Sigmoid colon (tissue), 7 donors: ENCODE measurements at regions of chr3 and their contacts with region 1.

Region 1: DNA sequence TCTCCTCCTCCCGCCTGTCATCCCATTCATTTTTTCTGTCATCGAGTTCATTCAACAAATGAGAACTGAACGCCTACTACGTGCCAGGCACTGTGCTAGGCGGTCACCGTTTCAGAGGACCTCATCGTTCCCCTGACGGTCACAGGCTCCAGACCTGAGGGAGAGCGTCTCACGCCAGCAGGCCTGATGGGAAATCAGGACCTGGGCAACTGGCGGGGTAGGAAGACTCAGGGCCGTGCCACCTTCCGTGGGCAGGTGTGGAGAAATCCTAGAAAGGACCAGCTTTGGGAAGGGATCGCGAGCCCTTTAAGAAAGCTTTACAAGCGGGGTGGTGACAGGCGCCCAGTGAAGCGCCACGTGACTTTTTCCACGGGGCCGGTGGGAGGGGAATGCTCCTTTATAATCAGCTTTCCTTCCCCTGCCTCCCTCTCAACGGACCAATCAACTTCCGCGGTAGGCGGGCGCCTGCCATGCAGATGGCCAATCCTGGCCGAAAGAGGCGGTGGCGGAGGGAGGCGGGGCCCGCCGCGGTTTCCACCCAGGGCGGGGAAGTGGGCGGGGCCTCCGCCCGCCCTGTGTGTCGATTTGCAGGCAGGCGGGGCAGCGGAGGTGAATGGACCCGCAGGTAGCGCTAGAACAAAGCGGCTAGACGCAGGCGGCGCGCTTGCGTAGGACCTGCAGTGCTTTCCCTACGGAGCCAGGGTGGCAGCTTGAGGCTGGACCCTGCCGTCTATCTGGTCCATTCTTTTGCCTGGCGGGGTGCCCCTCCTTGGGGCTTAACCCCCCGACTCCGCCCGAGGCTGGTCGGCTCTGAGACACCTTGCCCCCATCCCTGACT is 816 bp upstream of the DUSP7 start:
- DNase-seq: peak; percentile 100
- H3K4me3 ChIP-seq: peak overlapping the region; percentile 51 to 83 (median 71)
- H3K27ac ChIP-seq: peak overlapping the region; percentile 88 to 94 (median 91)
- H3K4me1 ChIP-seq: peaks cover 0 to 45% (median 40%) of the 10 kb centered on the region in 4 donors
- H3K27me3 ChIP-seq: no peaks in the 10 kb centered on the region
- CTCF ChIP-seq: no peak
- EP300 ChIP-seq: peak in 1 of 4 donors; percentile 49
- POLR2A ChIP-seq: no peak

Region 2: DNA sequence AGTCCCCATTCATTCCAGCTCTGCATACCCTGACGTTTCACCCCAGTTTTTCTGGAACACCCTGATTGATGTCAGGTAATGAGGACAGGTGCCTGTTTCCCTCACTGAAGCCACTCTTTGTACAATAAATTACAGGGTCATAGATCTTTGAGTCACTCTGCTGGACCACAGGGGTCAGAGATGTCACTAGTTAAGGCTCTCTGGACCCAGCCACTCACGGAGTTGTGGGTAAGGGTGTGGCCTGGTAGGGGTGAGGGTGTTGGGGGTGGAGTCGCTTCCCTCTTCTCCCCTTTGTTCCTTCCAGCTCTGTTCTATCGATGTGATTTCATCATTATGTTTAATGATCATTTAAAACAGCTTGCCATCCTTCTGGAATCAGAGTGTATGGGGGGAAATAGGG is 182.3 kb before region 1 on chr3:
- intact Hi-C with region 1: no loop called
- DNase-seq: no peak
- H3K4me3 ChIP-seq: no peak overlapping the region
- H3K27ac ChIP-seq: no peak overlapping the region
- H3K4me1 ChIP-seq: no peaks in the 10 kb centered on the region
- H3K27me3 ChIP-seq: no peaks in the 10 kb centered on the region
- CTCF ChIP-seq: no peak
- EP300 ChIP-seq: no peak
- POLR2A ChIP-seq: no peak

Region 3: GRCh38 chr3:52001443-52001974 is 55.7 kb before region 1 on chr3:
- intact Hi-C with region 1: loop called (anchors 2 kb)
- DNase-seq: peak; percentile 85
- H3K4me3 ChIP-seq: no peak overlapping the region
- H3K27ac ChIP-seq: no peak overlapping the region
- H3K4me1 ChIP-seq: peaks cover 0 to 19% (median 15%) of the 10 kb centered on the region in 4 donors
- H3K27me3 ChIP-seq: peaks cover 0 to 12% (median 0%) of the 10 kb centered on the region in 3 donors
- CTCF ChIP-seq: peak; percentile 85 to 94 (median 92)
- EP300 ChIP-seq: no peak
- POLR2A ChIP-seq: no peak

Region 4: GRCh38 chr3:52123106-52123725 is 66.0 kb after region 1 on chr3:
- intact Hi-C with region 1: loop called (anchors 2 kb)
- DNase-seq: peak; percentile 84
- H3K4me3 ChIP-seq: no peak overlapping the region
- H3K27ac ChIP-seq: no peak overlapping the region
- H3K4me1 ChIP-seq: peaks cover 0 to 14% (median 5%) of the 10 kb centered on the region in 4 donors
- H3K27me3 ChIP-seq: no peaks in the 10 kb centered on the region
- CTCF ChIP-seq: peak; percentile 91 to 94 (median 93)
- EP300 ChIP-seq: no peak
- POLR2A ChIP-seq: no peak

Region 5: GRCh38 chr3:52154117-52155094 is 97.2 kb after region 1 on chr3 and contains the start of gene POC1A:
- intact Hi-C with region 1: loop called (anchors 1 kb)
- DNase-seq: peak; percentile 99
- H3K4me3 ChIP-seq: peak within 1 kb of the TSS; percentile 47 to 65 (median 60)
- H3K27ac ChIP-seq: peak within 1 kb of the TSS; percentile 85 to 92 (median 86)
- H3K4me1 ChIP-seq: peaks cover 0 to 17% (median 14%) of the 10 kb centered on the region in 4 donors
- H3K27me3 ChIP-seq: no peaks in the 10 kb centered on the region
- CTCF ChIP-seq: peak in 3 of 4 experiments; percentile 20 to 40 (median 36)
- EP300 ChIP-seq: peak in 1 of 4 donors; percentile 56
- POLR2A ChIP-seq: peak in 1 of 2 donors; percentile 33
- total RNA-seq, gene POC1A: 0.66 to 1.7 (median 1.2) TPM

Region 6: GRCh38 chr3:52197842-52198668 is 140.9 kb after region 1 on chr3 and contains the start of gene ALAS1:
- intact Hi-C with region 1: loop called (anchors 5 kb)
- DNase-seq: peak; percentile 95
- H3K4me3 ChIP-seq: peak within 1 kb of the TSS; percentile 88 to 97 (median 91)
- H3K27ac ChIP-seq: peak within 1 kb of the TSS; percentile 86 to 90 (median 88)
- H3K4me1 ChIP-seq: peaks cover 0 to 65% (median 46%) of the 10 kb centered on the region in 4 donors
- H3K27me3 ChIP-seq: no peaks in the 10 kb centered on the region
- CTCF ChIP-seq: peak; percentile 29 to 54 (median 33)
- EP300 ChIP-seq: no peak
- POLR2A ChIP-seq: peak; percentile 58 to 88
- total RNA-seq, gene ALAS1: 23.2 to 27.3 (median 25.8) TPM